ENCODE measurements at regions of chr3 and their contacts with region 1.

Region 1: GRCh38 chr3:62723166-62723913 is 151.9 kb downstream of the CADPS start:
- DNase-seq: peak; percentile 82
- H3K4me3 ChIP-seq: peak overlapping the region; percentile 58
- H3K27ac ChIP-seq: peak overlapping the region; percentile 85
- H3K4me1 ChIP-seq: peaks cover 73% of the 10 kb centered on the region
- CTCF ChIP-seq: no peak

Region 2: DNA sequence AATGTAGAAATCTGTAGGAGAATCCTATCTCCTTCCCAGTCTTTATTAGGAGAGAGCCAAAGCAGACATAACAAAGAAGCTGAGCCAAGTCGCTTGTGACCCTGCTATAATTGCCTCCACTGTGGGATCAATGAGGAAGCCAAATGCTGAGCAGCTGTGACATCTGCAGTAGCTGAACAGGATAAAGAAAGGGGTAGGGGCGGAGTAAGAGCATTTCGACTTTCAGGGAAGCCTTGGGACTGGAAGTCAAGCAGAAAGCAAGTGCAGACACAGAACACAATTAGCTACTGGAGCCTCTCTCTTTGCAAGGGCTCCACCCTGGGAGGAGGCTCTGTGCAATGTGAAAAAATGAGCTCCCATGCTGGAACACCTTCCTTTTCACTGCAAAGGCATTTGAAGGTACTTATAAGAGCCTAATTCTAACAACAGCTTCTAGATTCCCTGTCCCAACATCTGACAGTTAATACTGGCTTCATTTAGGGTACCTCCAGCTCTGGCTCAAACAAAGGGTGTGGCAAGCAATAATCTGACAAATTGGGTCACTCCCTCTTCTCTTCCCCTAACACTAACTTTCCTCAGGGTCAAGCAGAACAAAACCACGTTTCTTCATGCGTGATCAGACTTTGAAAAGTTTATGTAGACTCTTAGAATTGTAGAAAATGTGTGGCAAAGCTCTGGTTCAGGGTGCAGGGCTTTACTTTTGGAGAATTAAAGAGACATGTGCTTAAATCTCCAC is 14.5 kb before region 1 on chr3:
- CTCF ChIA-PET with region 1: interaction called, 3 read pairs
- POLR2A ChIA-PET with region 1: interaction called, 18 read pairs
- intact Hi-C with region 1: no loop called
- DNase-seq: peak; percentile 16
- H3K4me3 ChIP-seq: no peak overlapping the region
- H3K27ac ChIP-seq: no peak overlapping the region
- H3K4me1 ChIP-seq: peaks cover 16% of the 10 kb centered on the region
- CTCF ChIP-seq: no peak

Region 3: GRCh38 chr3:62755320-62755719 is 32.0 kb after region 1 on chr3:
- CTCF ChIA-PET with region 1: interaction called, 3 read pairs
- POLR2A ChIA-PET with region 1: interaction called, 60 read pairs
- intact Hi-C with region 1: loop called (anchors 2 kb)
- DNase-seq: peak; percentile 94
- H3K4me3 ChIP-seq: peak overlapping the region; percentile 39
- H3K27ac ChIP-seq: peak overlapping the region; percentile 87
- H3K4me1 ChIP-seq: peaks cover 47% of the 10 kb centered on the region
- CTCF ChIP-seq: no peak

Region 4: GRCh38 chr3:62803276-62803675 is 79.9 kb after region 1 on chr3:
- CTCF ChIA-PET with region 1: interaction called, 5 read pairs
- POLR2A ChIA-PET with region 1: interaction called, 117 read pairs
- intact Hi-C with region 1: no loop called
- DNase-seq: peak; percentile 80
- H3K4me3 ChIP-seq: no peak overlapping the region
- H3K27ac ChIP-seq: peak overlapping the region; percentile 75
- H3K4me1 ChIP-seq: peaks cover 95% of the 10 kb centered on the region
- CTCF ChIP-seq: peak; percentile 82

Region 5: GRCh38 chr3:62818347-62818746 is 95.0 kb after region 1 on chr3:
- CTCF ChIA-PET with region 1: interaction called, 3 read pairs
- POLR2A ChIA-PET with region 1: interaction called, 14 read pairs
- intact Hi-C with region 1: loop called (anchors 2 kb)
- DNase-seq: peak; percentile 96
- H3K4me3 ChIP-seq: peak overlapping the region; percentile 49
- H3K27ac ChIP-seq: peak overlapping the region; percentile 99
- H3K4me1 ChIP-seq: peaks cover 98% of the 10 kb centered on the region
- CTCF ChIP-seq: no peak